ENCODE measurements at regions of chr14 and their contacts with region 1.

Region 1: GRCh38 chr14:21103710-21104447 is 3.0 kb downstream of the TMEM253 start:
- DNase-seq: peak; percentile 87 to 96 (median 93)
- ATAC-seq: peak; percentile 85
- H3K4me3 ChIP-seq: peak overlapping the region; percentile 68 to 75
- H3K4me3 Mint-ChIP-seq: peak overlapping the region; percentile 91
- H3K27ac ChIP-seq: peak overlapping the region; percentile 94 to 99
- H3K27ac Mint-ChIP-seq: peak overlapping the region; percentile 95
- H3K4me1 ChIP-seq: peaks cover 20% of the 10 kb centered on the region
- H3K4me1 Mint-ChIP-seq: peaks cover 21% of the 10 kb centered on the region
- H3K27me3 ChIP-seq: no peaks in the 10 kb centered on the region
- H3K27me3 Mint-ChIP-seq: no peaks in the 10 kb centered on the region
- CTCF ChIP-seq: peak; percentile 73

Region 2: DNA sequence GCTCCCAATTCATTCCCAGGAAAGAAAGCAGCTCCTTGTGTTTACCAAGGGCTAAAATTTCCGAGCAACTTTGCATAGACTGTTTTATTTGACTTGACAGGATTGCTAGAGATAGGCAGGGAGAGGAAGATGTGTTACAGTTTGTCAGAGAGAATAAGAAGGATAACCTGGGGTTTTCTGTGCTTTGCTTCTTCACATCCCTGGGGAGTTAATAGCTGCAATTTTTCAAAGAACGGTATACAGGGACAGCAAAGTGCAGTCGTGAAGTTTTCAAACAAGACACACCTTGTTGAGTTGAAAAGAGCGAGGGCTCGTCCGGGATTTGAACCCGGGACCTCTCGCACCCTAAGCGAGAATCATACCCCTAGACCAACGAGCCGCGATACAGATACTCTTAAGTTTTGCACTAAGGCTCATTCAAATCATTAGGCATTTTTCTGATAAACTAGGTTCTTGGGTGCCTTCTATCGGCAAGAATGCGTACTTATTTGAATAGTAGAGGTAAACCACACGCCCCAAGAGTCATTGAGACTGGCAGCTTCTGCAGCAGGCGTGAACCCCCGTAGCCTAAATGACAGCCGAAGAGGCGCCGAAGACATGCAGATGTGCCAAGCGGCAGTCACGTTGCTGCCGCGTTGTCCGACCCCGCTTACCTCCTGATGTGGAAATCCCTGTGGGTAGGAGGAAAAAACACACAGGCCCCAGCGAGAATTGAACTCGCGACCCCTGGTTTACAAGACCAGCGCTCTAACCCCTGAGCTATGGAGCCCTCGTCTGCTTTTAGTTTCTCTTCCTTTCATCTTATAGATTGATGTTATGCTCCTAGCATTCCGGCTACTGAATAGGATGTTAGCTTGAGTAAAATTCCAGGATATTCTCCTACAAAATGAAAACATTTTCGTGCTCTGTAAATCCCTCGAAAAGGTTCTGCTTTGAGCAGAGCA is 490.5 kb before region 1 on chr14:
- CTCF ChIA-PET with region 1: no interaction called
- POLR2A ChIA-PET with region 1: no interaction called
- intact Hi-C with region 1: loop called in 1 of 2 experiments (anchors 5 kb)
- DNase-seq: peak; percentile 66 to 95 (median 80)
- ATAC-seq: peak; percentile 84
- H3K4me3 ChIP-seq: peak overlapping the region; percentile 57
- H3K4me3 Mint-ChIP-seq: no peak overlapping the region
- H3K27ac ChIP-seq: peak overlapping the region in 1 of 2 experiments; percentile 42
- H3K27ac Mint-ChIP-seq: no peak overlapping the region
- H3K4me1 ChIP-seq: peaks cover 20% of the 10 kb centered on the region
- H3K4me1 Mint-ChIP-seq: peaks cover 7% of the 10 kb centered on the region
- H3K27me3 ChIP-seq: no peaks in the 10 kb centered on the region
- H3K27me3 Mint-ChIP-seq: peaks cover 2% of the 10 kb centered on the region
- CTCF ChIP-seq: peak; percentile 60

Region 3: GRCh38 chr14:20855652-20856291 is 248.1 kb before region 1 on chr14:
- CTCF ChIA-PET with region 1: no interaction called
- POLR2A ChIA-PET with region 1: no interaction called
- intact Hi-C with region 1: loop called (anchors 5 kb)
- DNase-seq: peak in 6 of 9 experiments; percentile 13 to 70 (median 28)
- ATAC-seq: peak; percentile 79
- H3K4me3 ChIP-seq: no peak overlapping the region
- H3K4me3 Mint-ChIP-seq: no peak overlapping the region
- H3K27ac ChIP-seq: no peak overlapping the region
- H3K27ac Mint-ChIP-seq: no peak overlapping the region
- H3K4me1 ChIP-seq: no peaks in the 10 kb centered on the region
- H3K4me1 Mint-ChIP-seq: peaks cover 5% of the 10 kb centered on the region
- H3K27me3 ChIP-seq: no peaks in the 10 kb centered on the region
- H3K27me3 Mint-ChIP-seq: peaks cover 22% of the 10 kb centered on the region
- CTCF ChIP-seq: peak; percentile 50

Region 4: DNA sequence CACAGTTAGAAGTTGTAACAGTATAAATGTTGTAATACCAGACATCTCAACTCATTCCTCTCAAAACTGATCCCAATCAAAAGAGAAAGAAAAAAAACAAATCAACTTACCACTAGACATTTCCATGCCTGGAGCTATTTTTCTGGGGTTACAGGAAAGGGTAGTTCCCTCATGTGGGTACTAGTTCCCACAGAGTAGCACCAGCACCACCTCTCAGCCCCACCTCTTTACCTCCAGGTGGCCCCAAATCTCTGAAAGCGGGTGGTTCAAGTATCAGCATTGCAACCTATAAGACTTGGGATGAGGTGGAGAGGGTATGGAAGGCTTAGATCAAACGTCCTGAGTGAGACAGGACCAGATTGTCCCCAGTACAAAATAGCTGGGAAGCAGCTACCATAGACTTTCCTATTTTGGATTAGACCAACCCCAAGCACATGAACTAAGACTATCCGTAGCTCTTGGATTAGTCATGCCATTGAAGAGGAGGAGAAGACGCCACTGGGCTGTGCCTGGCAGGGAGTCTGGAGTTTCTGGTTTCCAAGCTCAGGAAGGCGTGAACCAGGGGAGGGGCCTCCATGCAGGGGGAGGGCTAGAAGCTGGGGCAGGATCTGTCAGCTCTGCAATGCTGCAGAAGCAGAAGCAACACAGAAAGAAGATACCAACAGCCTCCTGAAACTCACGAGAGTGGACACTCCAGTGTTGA is 105.1 kb before region 1 on chr14 and contains the start of gene SLC39A2:
- CTCF ChIA-PET with region 1: interaction called, 20 read pairs
- POLR2A ChIA-PET with region 1: interaction called, 3 read pairs
- intact Hi-C with region 1: no loop called
- DNase-seq: no peak
- ATAC-seq: no peak
- H3K4me3 ChIP-seq: no peak within 1 kb of the TSS
- H3K4me3 Mint-ChIP-seq: no peak within 1 kb of the TSS
- H3K27ac ChIP-seq: peak within 1 kb of the TSS in 1 of 2 experiments; percentile 13
- H3K27ac Mint-ChIP-seq: peak within 1 kb of the TSS; percentile 12
- H3K4me1 ChIP-seq: peaks cover 8% of the 10 kb centered on the region
- H3K4me1 Mint-ChIP-seq: peaks cover 22% of the 10 kb centered on the region
- H3K27me3 ChIP-seq: no peaks in the 10 kb centered on the region
- H3K27me3 Mint-ChIP-seq: no peaks in the 10 kb centered on the region
- CTCF ChIP-seq: no peak
- total RNA-seq, gene SLC39A2: 0.33 to 0.62 TPM

Region 5: DNA sequence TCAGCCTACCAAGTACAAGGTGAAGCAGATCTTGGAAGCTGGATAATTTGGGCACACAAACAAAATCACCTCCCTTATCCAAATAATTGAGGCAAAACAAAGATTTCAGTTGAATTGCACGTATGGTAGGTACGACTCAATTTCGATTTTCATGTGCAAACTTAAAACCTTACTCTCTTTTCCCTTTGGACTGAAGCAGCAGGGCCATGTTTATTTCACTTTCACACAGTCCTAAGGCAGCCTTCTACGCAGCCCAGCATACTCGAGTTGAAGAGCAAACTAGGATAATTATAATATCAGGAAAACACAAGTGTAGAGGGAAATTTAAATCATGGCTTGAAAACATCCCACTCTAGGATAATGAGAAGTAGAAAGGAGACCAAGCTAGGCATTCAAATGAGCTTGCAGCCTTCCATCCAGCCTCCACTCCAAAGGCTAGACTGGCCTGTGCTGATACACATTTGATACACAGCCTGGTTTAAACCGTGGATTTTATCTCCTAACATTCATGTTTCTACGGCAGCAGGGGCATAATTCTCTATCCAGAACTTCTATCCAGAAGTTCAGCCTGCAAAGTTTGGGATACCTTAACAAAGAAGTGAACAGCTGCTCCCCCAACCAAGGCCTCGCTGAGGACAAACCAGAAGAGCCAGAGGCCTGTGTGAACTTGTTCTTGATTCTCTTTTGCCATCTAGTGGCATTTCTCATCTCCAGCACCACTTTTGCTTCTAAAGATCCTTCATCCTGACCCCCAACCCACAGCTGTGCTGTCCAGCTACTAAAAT is 64.1 kb before region 1 on chr14:
- CTCF ChIA-PET with region 1: interaction called, 12 read pairs
- POLR2A ChIA-PET with region 1: no interaction called
- intact Hi-C with region 1: no loop called
- DNase-seq: peak in 4 of 9 experiments; percentile 29 to 69 (median 58)
- ATAC-seq: peak; percentile 77
- H3K4me3 ChIP-seq: no peak overlapping the region
- H3K4me3 Mint-ChIP-seq: no peak overlapping the region
- H3K27ac ChIP-seq: no peak overlapping the region
- H3K27ac Mint-ChIP-seq: no peak overlapping the region
- H3K4me1 ChIP-seq: no peaks in the 10 kb centered on the region
- H3K4me1 Mint-ChIP-seq: peaks cover 7% of the 10 kb centered on the region
- H3K27me3 ChIP-seq: peaks cover 0 to 3% of the 10 kb centered on the region in 2 experiments
- H3K27me3 Mint-ChIP-seq: peaks cover 15% of the 10 kb centered on the region
- CTCF ChIP-seq: peak; percentile 46

Region 6: DNA sequence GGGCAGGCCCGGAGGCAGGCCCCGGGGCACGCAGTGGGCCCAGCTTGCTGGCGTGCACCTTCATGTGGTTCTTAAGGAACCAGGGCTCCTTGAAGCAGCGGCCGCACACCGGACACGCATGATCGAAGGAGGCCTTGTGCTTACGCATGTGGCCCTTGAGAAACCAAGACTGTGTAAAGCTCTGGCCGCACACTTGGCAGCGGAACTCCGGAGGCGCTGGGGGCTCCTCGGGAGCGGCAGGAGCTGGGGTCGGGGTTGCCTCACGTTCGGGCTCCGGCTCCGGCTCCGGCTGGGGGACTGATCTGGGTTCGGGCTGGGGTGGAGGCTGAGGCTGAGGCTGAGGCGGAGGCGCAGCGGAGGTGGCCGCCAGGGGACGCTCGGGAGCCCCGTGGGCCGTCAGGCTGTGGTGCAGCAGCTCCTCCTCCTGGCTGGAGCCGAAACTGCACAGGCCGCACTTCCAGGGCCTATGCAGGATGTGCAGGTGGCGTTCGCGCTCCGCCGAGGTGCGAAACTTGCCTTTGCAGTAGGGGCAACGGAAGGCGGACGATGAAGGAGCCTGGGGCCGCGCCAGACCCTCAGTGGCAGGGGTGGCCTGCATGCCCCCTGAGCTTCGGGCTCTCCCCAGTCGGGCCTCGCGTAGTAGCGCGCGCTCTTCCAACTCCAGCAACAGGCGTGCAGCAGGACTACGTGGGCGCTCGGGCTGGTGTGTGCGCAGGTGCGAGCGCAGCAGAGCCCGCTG is 11.4 kb before region 1 on chr14:
- CTCF ChIA-PET with region 1: interaction called, 252 read pairs
- POLR2A ChIA-PET with region 1: interaction called, 26 read pairs
- intact Hi-C with region 1: loop called (anchors 1 kb)
- DNase-seq: peak; percentile 86 to 97 (median 92)
- ATAC-seq: peak; percentile 89
- H3K4me3 ChIP-seq: no peak overlapping the region
- H3K4me3 Mint-ChIP-seq: no peak overlapping the region
- H3K27ac ChIP-seq: no peak overlapping the region
- H3K27ac Mint-ChIP-seq: peak overlapping the region; percentile 71
- H3K4me1 ChIP-seq: peaks cover 18% of the 10 kb centered on the region
- H3K4me1 Mint-ChIP-seq: peaks cover 28% of the 10 kb centered on the region
- H3K27me3 ChIP-seq: no peaks in the 10 kb centered on the region
- H3K27me3 Mint-ChIP-seq: no peaks in the 10 kb centered on the region
- CTCF ChIP-seq: peak; percentile 100

Region 7: GRCh38 chr14:21233457-21234076 is 129.7 kb after region 1 on chr14:
- CTCF ChIA-PET with region 1: no interaction called
- POLR2A ChIA-PET with region 1: no interaction called
- intact Hi-C with region 1: no loop called
- DNase-seq: peak in 2 of 9 experiments; percentile 46 to 57
- ATAC-seq: no peak
- H3K4me3 ChIP-seq: no peak overlapping the region
- H3K4me3 Mint-ChIP-seq: peak overlapping the region; percentile 63
- H3K27ac ChIP-seq: peak overlapping the region in 1 of 2 experiments; percentile 34
- H3K27ac Mint-ChIP-seq: peak overlapping the region; percentile 84
- H3K4me1 ChIP-seq: peaks cover 93% of the 10 kb centered on the region
- H3K4me1 Mint-ChIP-seq: peaks cover 88% of the 10 kb centered on the region
- H3K27me3 ChIP-seq: no peaks in the 10 kb centered on the region
- H3K27me3 Mint-ChIP-seq: no peaks in the 10 kb centered on the region
- CTCF ChIP-seq: no peak

Region 8: DNA sequence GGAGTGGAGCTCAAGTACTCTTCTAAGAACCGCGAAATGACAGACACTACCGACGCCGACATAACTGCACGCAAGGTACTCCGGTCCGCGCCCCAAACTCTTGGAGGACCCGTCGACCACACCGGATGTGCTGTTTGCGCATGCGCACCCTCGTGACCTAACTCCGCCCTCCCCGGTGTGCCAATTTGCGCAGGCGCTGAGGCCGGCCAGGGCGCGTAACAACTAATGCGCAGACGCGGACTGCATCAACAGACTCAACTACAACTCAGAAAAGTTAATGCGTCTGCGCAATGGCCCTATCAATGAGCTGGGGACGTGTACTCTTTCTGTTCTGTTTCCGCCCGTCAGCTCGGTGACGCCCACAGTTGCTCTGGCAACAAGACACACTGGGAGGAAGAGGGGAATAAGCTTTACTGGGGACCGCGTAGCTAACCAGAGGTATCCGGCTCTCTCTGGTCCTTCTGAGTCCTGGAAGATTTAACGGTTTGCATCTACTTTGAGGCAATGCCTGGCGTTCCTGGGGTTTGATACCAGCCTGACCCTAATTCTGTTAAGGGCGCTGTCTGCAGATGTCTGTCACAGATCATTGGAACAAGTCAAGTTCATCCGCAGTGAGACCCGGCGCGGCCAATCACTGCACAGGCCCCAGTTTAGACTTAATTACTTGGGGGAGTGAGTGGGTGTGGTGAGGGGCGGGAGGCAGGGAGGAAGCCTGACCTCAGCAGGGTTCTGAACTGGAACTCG is 1485.4 kb after region 1 on chr14 and contains the start of gene DAD1:
- CTCF ChIA-PET with region 1: no interaction called
- POLR2A ChIA-PET with region 1: no interaction called
- intact Hi-C with region 1: loop called in 1 of 2 experiments (anchors 5 kb)
- DNase-seq: peak; percentile 99 to 100 (median 100)
- ATAC-seq: peak; percentile 86
- H3K4me3 ChIP-seq: peak within 1 kb of the TSS; percentile 64 to 67
- H3K4me3 Mint-ChIP-seq: peak within 1 kb of the TSS; percentile 98
- H3K27ac ChIP-seq: peak within 1 kb of the TSS; percentile 95 to 99
- H3K27ac Mint-ChIP-seq: peak within 1 kb of the TSS; percentile 100
- H3K4me1 ChIP-seq: peaks cover 47% of the 10 kb centered on the region
- H3K4me1 Mint-ChIP-seq: peaks cover 49% of the 10 kb centered on the region
- H3K27me3 ChIP-seq: no peaks in the 10 kb centered on the region
- H3K27me3 Mint-ChIP-seq: no peaks in the 10 kb centered on the region
- CTCF ChIP-seq: no peak
- total RNA-seq, gene DAD1: 27.2 to 35.6 TPM

Measured in CD8-positive, alpha-beta T cell (primary cell).